ENCODE measurements at regions of chr14 and their contacts with region 1.

Region 1: DNA sequence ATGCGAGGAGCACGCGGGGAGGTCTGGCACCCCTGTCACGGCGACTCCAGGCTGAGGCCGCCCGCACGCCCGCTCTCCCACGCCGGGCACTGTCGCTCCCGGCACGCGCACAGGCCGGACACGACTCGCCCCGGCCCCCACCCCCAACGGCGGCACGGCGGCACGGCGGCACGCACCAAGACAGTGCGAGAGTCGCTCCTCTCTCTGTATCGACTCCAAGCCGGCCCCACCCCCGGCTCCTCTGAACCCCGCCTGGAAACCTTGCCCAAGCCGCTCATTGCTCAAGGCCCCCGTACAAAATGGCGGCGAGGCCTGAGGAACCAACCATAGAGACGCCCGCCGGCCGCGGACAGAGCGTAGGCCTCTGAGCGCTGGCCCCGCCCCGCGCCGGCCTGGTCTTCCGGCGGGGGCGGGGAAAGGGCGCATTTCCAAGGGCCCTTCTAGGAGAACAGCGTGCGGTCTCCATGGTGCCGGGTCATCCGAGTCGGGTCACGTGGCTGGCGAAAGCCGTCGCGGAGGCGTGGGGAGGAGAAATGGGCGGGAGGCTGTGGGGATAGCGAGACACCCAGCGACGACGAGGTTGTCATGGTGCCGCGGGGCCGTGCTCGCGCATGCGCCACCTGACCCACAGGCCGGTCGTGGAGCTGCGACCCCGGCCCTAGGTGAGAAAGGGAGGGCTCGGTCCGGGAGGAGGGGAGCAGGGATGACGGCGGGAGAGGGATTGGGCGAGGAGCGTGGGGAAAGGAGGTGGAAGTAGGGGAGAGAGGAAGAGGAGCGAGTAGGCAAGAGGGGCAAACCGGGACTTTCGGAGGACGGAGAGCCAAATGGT is at the start of gene CIPC:
- DNase-seq: peak; percentile 99
- H3K4me3 ChIP-seq: peak within 1 kb of the TSS; percentile 84 to 96 (median 91)
- H3K27ac ChIP-seq: peak within 1 kb of the TSS; percentile 93
- H3K4me1 ChIP-seq: peaks cover 18% of the 10 kb centered on the region
- H3K27me3 ChIP-seq: no peaks in the 10 kb centered on the region
- CTCF ChIP-seq: no peak
- total RNA-seq, gene CIPC: 11.6 to 30.2 TPM

Region 2: GRCh38 chr14:76710056-76711010 is 387.6 kb before region 1 on chr14:
- CTCF ChIA-PET with region 1: no interaction called
- dilution Hi-C with region 1: no loop called
- in situ Hi-C with region 1: loop called (anchors 25 kb)
- intact Hi-C with region 1: loop called (anchors 1 kb)
- DNase-seq: peak; percentile 20
- H3K4me3 ChIP-seq: no peak overlapping the region
- H3K27ac ChIP-seq: no peak overlapping the region
- H3K4me1 ChIP-seq: no peaks in the 10 kb centered on the region
- H3K27me3 ChIP-seq: no peaks in the 10 kb centered on the region
- CTCF ChIP-seq: peak; percentile 69 to 77

Region 3: GRCh38 chr14:77124345-77125280 is 26.7 kb after region 1 on chr14:
- CTCF ChIA-PET with region 1: interaction called, 12 read pairs
- dilution Hi-C with region 1: no loop called
- in situ Hi-C with region 1: no loop called
- intact Hi-C with region 1: loop called (anchors 1 kb)
- DNase-seq: peak; percentile 8
- H3K4me3 ChIP-seq: peak overlapping the region in 2 of 3 experiments; percentile 37 to 40
- H3K27ac ChIP-seq: no peak overlapping the region
- H3K4me1 ChIP-seq: peaks cover 32% of the 10 kb centered on the region
- H3K27me3 ChIP-seq: no peaks in the 10 kb centered on the region
- CTCF ChIP-seq: peak; percentile 34 to 42

Region 4: DNA sequence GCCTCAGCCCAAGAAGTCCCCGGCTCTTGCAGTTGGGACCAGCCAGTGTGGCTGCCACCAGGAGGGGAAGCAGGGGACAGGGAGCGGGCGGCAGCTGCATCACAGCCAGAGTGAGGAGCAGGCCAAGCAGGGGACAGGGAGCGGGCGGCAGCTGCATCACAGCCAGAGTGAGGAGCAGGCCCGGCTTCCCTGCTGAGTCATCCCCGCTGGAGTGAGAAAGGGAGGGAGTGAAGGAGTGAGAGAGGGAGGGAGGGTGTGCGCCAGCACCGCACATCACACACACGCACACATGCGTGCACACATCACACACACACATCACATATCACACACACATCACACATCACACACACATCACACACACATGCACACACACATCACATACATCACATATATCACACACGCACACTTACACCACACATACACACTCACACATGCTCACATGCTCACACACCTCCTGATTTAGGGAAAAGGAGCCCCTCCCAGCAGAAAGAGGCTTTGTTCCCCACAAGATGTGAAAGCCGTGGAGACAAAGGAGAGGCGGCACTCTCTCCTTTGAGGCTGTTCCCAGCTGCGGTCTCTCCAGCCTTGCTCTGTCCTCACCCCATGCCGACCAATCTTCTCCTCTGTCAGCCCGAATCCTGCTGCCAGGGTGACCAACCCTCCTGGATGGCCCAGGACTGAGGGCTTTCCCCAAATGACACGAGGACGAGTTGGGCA is 60.4 kb after region 1 on chr14:
- CTCF ChIA-PET with region 1: no interaction called
- dilution Hi-C with region 1: no loop called
- in situ Hi-C with region 1: no loop called
- intact Hi-C with region 1: no loop called
- DNase-seq: peak; percentile 40
- H3K4me3 ChIP-seq: no peak overlapping the region
- H3K27ac ChIP-seq: no peak overlapping the region
- H3K4me1 ChIP-seq: peaks cover 4% of the 10 kb centered on the region
- H3K27me3 ChIP-seq: no peaks in the 10 kb centered on the region
- CTCF ChIP-seq: no peak

Region 5: DNA sequence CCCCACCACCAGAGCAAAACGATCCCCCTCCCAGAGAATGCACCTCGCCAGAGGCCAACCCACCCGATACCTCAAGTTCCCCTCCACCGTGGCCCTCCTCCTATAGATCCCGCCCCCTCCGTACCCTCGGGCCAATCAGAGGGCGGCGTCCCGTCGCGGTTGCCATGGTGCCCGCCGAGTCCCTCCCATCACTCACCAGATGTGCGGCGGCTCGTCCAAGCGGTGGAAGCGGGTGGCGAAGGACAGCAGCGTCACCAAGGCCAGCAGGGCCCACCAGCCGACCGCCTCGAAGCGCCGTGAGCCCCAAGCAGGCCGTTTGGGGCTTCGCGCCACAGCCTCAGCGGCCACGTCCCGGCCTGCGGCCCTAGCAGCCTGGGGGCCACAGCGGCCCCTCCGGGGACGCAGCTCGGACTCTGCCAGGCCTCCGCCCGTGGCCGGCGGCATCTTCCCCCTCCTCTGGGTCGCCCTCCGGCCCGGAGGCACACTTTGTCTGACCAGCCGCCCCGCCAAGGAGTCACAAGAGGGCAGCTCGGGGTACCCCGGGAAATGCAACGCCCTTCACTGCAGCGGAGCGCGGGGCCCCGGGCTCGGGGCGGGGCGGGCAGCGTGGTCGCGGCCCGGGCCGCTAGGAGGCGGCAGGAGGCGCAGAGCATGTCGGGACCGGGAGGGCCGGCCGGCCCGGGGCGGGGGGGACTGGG is 222.5 kb after region 1 on chr14 and contains the start of gene POMT2:
- CTCF ChIA-PET with region 1: no interaction called
- dilution Hi-C with region 1: no loop called
- in situ Hi-C with region 1: no loop called
- intact Hi-C with region 1: loop called (anchors 1 kb)
- DNase-seq: peak; percentile 88
- H3K4me3 ChIP-seq: peak within 1 kb of the TSS; percentile 89 to 92 (median 90)
- H3K27ac ChIP-seq: peak within 1 kb of the TSS; percentile 87
- H3K4me1 ChIP-seq: peaks cover 38% of the 10 kb centered on the region
- H3K27me3 ChIP-seq: no peaks in the 10 kb centered on the region
- CTCF ChIP-seq: peak in 1 of 2 donors; percentile 34
- total RNA-seq, gene POMT2: 17.0 to 38.4 TPM

Measured in mammary epithelial cell (primary cell).